MCF 10A (cell line): ENCODE measurements at regions of chr1 and their contacts with region 1.

Region 1: GRCh38 chr1:156500797-156501499 is 373 bp upstream of the MEF2D start:
- DNase-seq: peak; percentile 97
- H3K4me3 Mint-ChIP-seq: peak overlapping the region; percentile 85
- H3K27ac Mint-ChIP-seq: peak overlapping the region; percentile 97
- H3K4me1 Mint-ChIP-seq: peaks cover 68% of the 10 kb centered on the region
- H3K27me3 Mint-ChIP-seq: no peaks in the 10 kb centered on the region
- CTCF ChIP-seq: peak; percentile 72

Region 2: DNA sequence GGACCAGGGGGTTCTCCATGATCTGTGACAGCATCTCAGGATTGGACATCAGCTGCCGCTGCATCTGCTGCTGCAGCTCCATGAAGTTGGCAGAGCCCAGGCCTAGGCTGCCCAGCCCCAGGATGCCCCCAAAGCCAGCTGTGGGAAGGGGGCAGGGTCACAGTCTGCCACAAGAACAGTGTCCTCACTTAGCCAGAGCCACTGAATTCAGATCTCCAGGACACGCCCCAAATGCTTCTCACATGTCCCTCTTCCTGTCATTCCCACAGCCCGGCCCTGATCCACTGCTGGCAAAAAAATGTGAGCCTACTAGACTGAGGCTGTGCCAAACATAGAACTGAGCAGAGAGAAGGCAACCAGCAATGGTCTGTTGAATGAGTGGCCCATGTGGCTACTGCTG is 450.5 kb before region 1 on chr1:
- CTCF ChIA-PET with region 1: no interaction called
- POLR2A ChIA-PET with region 1: no interaction called
- intact Hi-C with region 1: no loop called
- DNase-seq: no peak
- H3K4me3 Mint-ChIP-seq: no peak overlapping the region
- H3K27ac Mint-ChIP-seq: no peak overlapping the region
- H3K4me1 Mint-ChIP-seq: peaks cover 26% of the 10 kb centered on the region
- H3K27me3 Mint-ChIP-seq: no peaks in the 10 kb centered on the region
- CTCF ChIP-seq: no peak

Region 3: GRCh38 chr1:156456622-156457465 is 44.1 kb before region 1 on chr1:
- CTCF ChIA-PET with region 1: interaction called, 79 read pairs
- POLR2A ChIA-PET with region 1: interaction called, 549 read pairs
- intact Hi-C with region 1: loop called (anchors 1 kb)
- DNase-seq: peak; percentile 100
- H3K4me3 Mint-ChIP-seq: peak overlapping the region; percentile 90
- H3K27ac Mint-ChIP-seq: peak overlapping the region; percentile 99
- H3K4me1 Mint-ChIP-seq: peaks cover 42% of the 10 kb centered on the region
- H3K27me3 Mint-ChIP-seq: no peaks in the 10 kb centered on the region
- CTCF ChIP-seq: no peak

Region 4: DNA sequence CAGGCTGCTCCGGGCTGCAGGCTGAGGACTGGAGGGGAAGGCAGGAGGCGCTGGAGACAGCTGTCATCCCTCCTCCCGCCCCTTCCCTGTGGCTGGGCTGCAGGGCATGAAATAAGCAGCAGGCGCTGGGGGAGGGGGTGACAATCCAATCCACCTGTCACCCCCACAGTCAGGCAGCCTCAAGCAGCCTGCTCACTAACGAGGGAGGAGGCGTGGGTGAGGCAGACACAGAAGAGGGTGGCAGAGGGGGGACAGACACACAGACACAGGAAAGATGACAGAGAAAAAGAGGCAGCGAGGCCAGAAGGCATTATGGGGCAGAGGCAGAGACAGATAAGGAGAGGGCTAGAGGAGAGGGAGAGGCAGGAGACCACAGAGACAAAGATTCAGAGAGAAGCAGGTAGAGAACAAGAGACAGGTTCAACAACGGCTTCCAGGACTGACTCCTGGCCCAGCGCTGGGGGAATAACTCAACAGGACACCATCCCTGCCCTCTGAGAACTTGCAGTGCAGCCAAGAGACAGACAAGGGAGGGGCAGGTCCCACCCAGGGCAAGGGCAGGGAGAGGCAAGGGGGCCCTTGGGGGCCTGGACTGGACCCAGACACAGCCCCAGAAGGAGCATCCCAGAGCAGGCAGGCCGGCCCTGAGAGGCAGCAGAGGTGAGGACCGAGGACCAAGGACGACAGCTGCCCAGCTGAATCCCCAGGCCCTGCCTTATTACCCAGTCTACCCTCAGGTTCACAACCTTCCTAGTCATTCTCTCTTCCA is 11.6 kb before region 1 on chr1:
- CTCF ChIA-PET with region 1: interaction called, 83 read pairs
- POLR2A ChIA-PET with region 1: interaction called, 45 read pairs
- intact Hi-C with region 1: no loop called
- DNase-seq: no peak
- H3K4me3 Mint-ChIP-seq: peak overlapping the region; percentile 44
- H3K27ac Mint-ChIP-seq: peak overlapping the region; percentile 74
- H3K4me1 Mint-ChIP-seq: peaks cover 74% of the 10 kb centered on the region
- H3K27me3 Mint-ChIP-seq: no peaks in the 10 kb centered on the region
- CTCF ChIP-seq: no peak

Region 5: DNA sequence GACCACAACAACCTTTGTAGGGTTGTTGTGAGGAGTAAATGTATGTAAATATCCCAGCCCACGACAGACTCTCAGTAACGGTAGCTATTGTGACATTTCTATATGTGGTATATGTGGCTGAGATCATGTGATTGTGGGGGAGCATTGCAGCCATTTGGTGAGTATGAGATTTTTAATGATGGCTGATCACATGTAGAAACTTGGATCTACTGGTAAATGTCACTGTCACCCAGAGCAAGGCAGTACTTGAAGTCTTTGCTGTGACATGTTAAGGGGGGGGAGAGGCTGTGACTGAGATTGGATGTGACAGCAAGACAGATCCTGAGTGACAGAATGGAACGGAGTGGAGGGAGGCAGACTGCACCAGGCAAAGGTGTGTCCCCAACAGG is 23.5 kb after region 1 on chr1:
- CTCF ChIA-PET with region 1: interaction called, 11 read pairs
- POLR2A ChIA-PET with region 1: interaction called, 87 read pairs
- intact Hi-C with region 1: no loop called
- DNase-seq: no peak
- H3K4me3 Mint-ChIP-seq: no peak overlapping the region
- H3K27ac Mint-ChIP-seq: no peak overlapping the region
- H3K4me1 Mint-ChIP-seq: no peaks in the 10 kb centered on the region
- H3K27me3 Mint-ChIP-seq: no peaks in the 10 kb centered on the region
- CTCF ChIP-seq: no peak

Region 6: GRCh38 chr1:156571949-156572662 is 71.2 kb after region 1 on chr1 and contains the start of gene IQGAP3:
- CTCF ChIA-PET with region 1: interaction called, 12 read pairs
- POLR2A ChIA-PET with region 1: interaction called, 20 read pairs
- intact Hi-C with region 1: loop called (anchors 1 kb)
- DNase-seq: peak; percentile 94
- H3K4me3 Mint-ChIP-seq: peak within 1 kb of the TSS; percentile 87
- H3K27ac Mint-ChIP-seq: peak within 1 kb of the TSS; percentile 70
- H3K4me1 Mint-ChIP-seq: peaks cover 28% of the 10 kb centered on the region
- H3K27me3 Mint-ChIP-seq: peaks cover 11% of the 10 kb centered on the region
- CTCF ChIP-seq: no peak
- total RNA-seq, gene IQGAP3: 36.4 and 48.3 TPM in 2 replicates

Region 7: DNA sequence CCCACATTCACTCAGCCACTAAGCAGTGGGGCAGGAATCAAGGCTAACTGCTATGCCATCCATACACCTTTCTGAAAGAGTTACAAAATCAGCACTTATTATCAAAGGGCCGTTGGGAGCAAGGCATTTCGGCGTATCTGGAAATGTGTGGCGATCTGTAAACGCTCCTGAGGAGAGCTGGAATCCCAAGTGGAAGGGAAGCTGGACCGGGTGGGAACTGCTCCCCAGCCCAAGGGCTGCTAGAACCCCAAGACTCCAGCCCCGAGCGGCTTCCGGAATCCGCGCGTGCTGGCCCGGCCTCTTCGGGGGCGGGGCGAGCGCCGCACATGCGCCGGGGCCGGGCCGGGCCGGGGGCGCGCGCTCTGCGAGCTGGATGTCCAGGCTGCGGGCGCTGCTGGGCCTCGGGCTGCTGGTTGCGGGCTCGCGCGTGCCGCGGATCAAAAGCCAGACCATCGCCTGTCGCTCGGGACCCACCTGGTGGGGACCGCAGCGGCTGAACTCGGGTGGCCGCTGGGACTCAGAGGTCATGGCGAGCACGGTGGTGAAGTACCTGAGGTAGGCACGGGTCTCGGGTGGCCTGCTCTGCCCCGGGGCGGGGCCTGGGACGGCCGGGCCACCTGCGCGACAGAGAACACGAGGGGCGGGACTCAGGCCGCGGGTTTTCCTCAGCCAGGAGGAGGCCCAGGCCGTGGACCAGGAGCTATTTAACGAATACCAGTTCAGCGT is 90.6 kb after region 1 on chr1 and contains the start of gene NAXE:
- CTCF ChIA-PET with region 1: interaction called, 9 read pairs
- POLR2A ChIA-PET with region 1: interaction called, 116 read pairs
- intact Hi-C with region 1: no loop called
- DNase-seq: peak; percentile 77
- H3K4me3 Mint-ChIP-seq: peak within 1 kb of the TSS; percentile 77
- H3K27ac Mint-ChIP-seq: peak within 1 kb of the TSS; percentile 65
- H3K4me1 Mint-ChIP-seq: peaks cover 13% of the 10 kb centered on the region
- H3K27me3 Mint-ChIP-seq: no peaks in the 10 kb centered on the region
- CTCF ChIP-seq: no peak
- total RNA-seq, gene NAXE: 141 and 155 TPM in 2 replicates

Region 8: GRCh38 chr1:156740679-156741612 is 240.0 kb after region 1 on chr1 and contains the start of gene MRPL24:
- CTCF ChIA-PET with region 1: no interaction called
- POLR2A ChIA-PET with region 1: interaction called, 4 read pairs
- intact Hi-C with region 1: loop called (anchors 10 kb)
- DNase-seq: peak; percentile 100
- H3K4me3 Mint-ChIP-seq: peak within 1 kb of the TSS; percentile 100
- H3K27ac Mint-ChIP-seq: peak within 1 kb of the TSS; percentile 98
- H3K4me1 Mint-ChIP-seq: peaks cover 30% of the 10 kb centered on the region
- H3K27me3 Mint-ChIP-seq: no peaks in the 10 kb centered on the region
- CTCF ChIP-seq: no peak
- total RNA-seq, gene MRPL24: 233 and 261 TPM in 2 replicates